Activated T-helper 1 cell treated with anti-CD3 and anti-CD28 coated beads, Interleukin-12 subunit alpha, Interleukin-12 subunit beta, Interleukin-2, Interleukin-4 antibody, amounts not matched to agents 30 ng/mL and 10 ng/mL and 1 ng/mL, durations not matched to agents 14 hours and 24 hours and 36 hours (primary cell): ENCODE measurements at regions of chr2 and their contacts with region 1.

Region 1: GRCh38 chr2:113910110-113910717 is 20.3 kb downstream of the ACTR3 start:
- DNase-seq: no peak
- H3K4me3 Mint-ChIP-seq: peak overlapping the region; percentile 50
- H3K27ac Mint-ChIP-seq: peak overlapping the region; percentile 73
- H3K4me1 Mint-ChIP-seq: peaks cover 57% of the 10 kb centered on the region
- H3K27me3 Mint-ChIP-seq: no peaks in the 10 kb centered on the region

Region 2: DNA sequence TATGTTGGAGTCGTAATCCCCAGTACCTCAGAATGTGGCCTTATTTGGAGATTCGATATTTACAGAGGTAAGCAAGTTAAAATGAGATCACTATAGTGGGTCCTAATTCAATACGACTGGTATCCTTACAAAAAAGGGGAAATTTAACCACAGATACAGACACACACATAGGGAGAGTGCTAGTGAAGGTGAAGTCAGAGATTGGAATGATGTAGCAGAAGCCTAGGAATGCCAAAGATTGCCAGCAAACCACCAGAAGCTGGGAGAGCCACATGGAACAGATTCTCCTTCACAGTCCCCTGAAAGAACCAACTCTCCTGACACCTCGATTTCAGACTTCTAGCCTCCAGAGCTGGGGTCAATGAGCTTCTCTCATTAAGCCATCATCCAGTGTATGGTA is 38.0 kb before region 1 on chr2:
- intact Hi-C with region 1: no loop called
- DNase-seq: no peak
- H3K4me3 Mint-ChIP-seq: no peak overlapping the region
- H3K27ac Mint-ChIP-seq: no peak overlapping the region
- H3K4me1 Mint-ChIP-seq: peaks cover 36% of the 10 kb centered on the region
- H3K27me3 Mint-ChIP-seq: no peaks in the 10 kb centered on the region

Region 3: GRCh38 chr2:113895301-113895700 is 14.9 kb before region 1 on chr2:
- intact Hi-C with region 1: loop called (anchors 1 kb)
- DNase-seq: no peak
- H3K4me3 Mint-ChIP-seq: peak overlapping the region; percentile 100
- H3K27ac Mint-ChIP-seq: peak overlapping the region; percentile 40
- H3K4me1 Mint-ChIP-seq: peaks cover 85% of the 10 kb centered on the region
- H3K27me3 Mint-ChIP-seq: no peaks in the 10 kb centered on the region

Region 4: GRCh38 chr2:113922784-113923183 is 12.6 kb after region 1 on chr2:
- intact Hi-C with region 1: loop called (anchors 2 kb)
- DNase-seq: no peak
- H3K4me3 Mint-ChIP-seq: no peak overlapping the region
- H3K27ac Mint-ChIP-seq: no peak overlapping the region
- H3K4me1 Mint-ChIP-seq: peaks cover 16% of the 10 kb centered on the region
- H3K27me3 Mint-ChIP-seq: no peaks in the 10 kb centered on the region